CD14-positive monocyte (primary cell): ENCODE measurements at regions of chr4 and their contacts with region 1.

Region 1: DNA sequence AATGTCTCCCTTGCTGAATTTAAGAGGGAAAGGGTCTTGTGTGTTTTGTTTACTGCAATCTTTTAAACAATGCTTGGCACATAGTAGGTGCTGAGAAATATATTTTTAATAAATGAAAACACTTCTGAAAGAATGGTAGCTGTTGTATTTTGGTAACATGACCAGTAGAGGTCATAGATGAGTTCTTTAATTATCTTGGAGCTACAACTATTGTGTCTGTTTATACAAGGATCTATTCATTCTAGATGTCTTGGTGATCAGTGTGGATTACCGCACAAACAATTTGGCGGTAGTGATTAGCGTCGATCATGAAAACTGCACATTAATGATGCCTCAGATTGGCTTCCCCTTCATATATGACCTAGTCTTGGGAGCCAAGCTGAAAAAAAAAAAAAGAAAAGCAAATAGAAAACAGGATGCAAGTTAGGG is 21.4 kb upstream of the SCRG1 start:
- DNase-seq: peak in 2 of 3 donors; percentile 9 to 45
- H3K4me3 ChIP-seq: no peak overlapping the region
- H3K4me3 Mint-ChIP-seq: no peak overlapping the region
- H3K27ac ChIP-seq: no peak overlapping the region
- H3K27ac Mint-ChIP-seq: no peak overlapping the region
- H3K4me1 ChIP-seq: peaks cover 38 to 40% of the 10 kb centered on the region in 2 donors
- H3K4me1 Mint-ChIP-seq: peaks cover 35% of the 10 kb centered on the region
- H3K27me3 ChIP-seq: no peaks in the 10 kb centered on the region
- H3K27me3 Mint-ChIP-seq: peaks cover 0 to 3% (median 0%) of the 10 kb centered on the region in 3 donors
- CTCF ChIP-seq: peak; percentile 73

Region 2: DNA sequence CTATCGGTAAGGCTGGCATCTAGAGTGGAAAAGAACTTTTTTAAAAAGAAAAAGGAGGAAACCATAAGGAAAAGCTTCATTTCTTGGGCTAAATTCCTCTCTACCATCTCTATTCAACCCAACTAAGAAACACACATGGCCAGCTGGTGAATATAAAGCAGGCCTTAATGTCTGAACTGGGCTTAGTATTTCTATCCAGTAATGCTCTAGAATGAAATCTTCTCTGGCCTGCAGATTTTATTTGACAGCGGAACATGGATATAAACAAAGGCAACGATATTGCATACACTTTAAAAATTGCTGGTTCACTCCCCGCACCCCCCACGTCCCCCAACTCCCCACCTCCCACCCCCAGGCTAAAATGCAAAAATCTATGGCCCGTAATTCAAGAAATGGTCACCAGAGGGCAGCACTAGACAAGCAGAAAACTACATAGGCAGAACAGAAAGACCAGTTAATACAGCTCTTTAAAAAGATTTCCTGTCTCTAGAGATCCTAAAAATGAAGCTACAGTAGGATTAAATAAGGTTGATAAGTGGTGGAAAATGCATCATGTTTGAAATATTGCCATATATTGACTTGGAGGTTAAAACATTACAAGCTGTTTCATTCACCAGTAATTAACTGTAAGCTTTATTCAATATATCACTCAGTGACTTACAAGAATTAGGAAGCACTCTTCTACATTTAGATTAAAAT is 407.0 kb before region 1 on chr4:
- intact Hi-C with region 1: loop called (anchors 5 to 10 kb)
- DNase-seq: peak; percentile 28 to 41 (median 40)
- H3K4me3 ChIP-seq: no peak overlapping the region
- H3K4me3 Mint-ChIP-seq: no peak overlapping the region
- H3K27ac ChIP-seq: no peak overlapping the region
- H3K27ac Mint-ChIP-seq: no peak overlapping the region
- H3K4me1 ChIP-seq: peaks cover 0 to 18% of the 10 kb centered on the region in 2 donors
- H3K4me1 Mint-ChIP-seq: peaks cover 19% of the 10 kb centered on the region
- H3K27me3 ChIP-seq: no peaks in the 10 kb centered on the region
- H3K27me3 Mint-ChIP-seq: peaks cover 0 to 3% (median 0%) of the 10 kb centered on the region in 3 donors
- CTCF ChIP-seq: peak; percentile 85

Region 3: DNA sequence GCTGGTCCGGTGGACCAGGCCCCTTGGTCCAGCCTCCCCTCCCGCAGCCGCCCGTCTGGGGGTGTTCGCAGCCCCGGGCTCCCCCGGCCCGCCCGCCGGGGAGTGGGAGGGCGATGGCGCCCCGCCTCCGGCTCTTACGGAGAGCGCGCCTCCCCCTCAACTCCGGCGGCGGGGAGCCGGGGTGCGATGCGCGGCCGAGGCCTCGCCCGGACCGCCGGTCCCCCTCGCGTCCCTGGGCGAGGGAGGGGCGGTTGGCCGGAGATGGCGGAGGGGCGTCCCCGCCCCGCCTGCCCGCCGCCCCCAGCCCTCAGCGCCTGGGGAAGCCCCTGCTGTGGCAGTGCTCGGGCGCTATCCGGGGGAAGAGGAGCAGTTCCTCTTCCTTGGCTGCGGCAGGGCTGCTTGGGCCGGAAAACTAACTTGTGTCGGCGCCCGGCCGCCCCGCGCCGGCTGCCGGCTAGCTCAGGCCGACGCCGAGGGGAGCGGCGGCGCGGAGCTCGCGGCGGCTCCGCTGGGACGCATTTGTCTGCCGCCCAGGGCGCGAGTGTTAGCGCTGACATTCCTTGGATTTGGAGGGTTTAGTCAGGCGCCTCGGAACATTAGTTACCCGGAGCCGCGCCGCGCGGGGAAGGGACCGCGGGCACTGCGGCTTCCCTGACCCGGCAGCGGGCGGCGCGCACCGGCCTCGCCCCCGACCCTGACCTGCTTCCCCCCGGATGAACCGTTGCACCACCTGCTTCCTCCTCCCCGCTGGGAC is 250.7 kb before region 1 on chr4:
- intact Hi-C with region 1: loop called in 1 of 2 experiments (anchors 10 kb)
- DNase-seq: peak; percentile 74 to 83 (median 78)
- H3K4me3 ChIP-seq: peak overlapping the region; percentile 75 to 92 (median 83)
- H3K4me3 Mint-ChIP-seq: peak overlapping the region; percentile 80 to 87
- H3K27ac ChIP-seq: peak overlapping the region; percentile 84 to 89
- H3K27ac Mint-ChIP-seq: peak overlapping the region; percentile 78 to 90 (median 88)
- H3K4me1 ChIP-seq: peaks cover 46 to 59% of the 10 kb centered on the region in 2 donors
- H3K4me1 Mint-ChIP-seq: peaks cover 60% of the 10 kb centered on the region
- H3K27me3 ChIP-seq: no peaks in the 10 kb centered on the region
- H3K27me3 Mint-ChIP-seq: peaks cover 0 to 3% (median 0%) of the 10 kb centered on the region in 3 donors
- CTCF ChIP-seq: no peak

Region 4: GRCh38 chr4:173318648-173319211 is 101.6 kb before region 1 on chr4:
- intact Hi-C with region 1: loop called (anchors 2 to 5 kb)
- DNase-seq: peak; percentile 25 to 64 (median 62)
- H3K4me3 ChIP-seq: no peak overlapping the region
- H3K4me3 Mint-ChIP-seq: no peak overlapping the region
- H3K27ac ChIP-seq: peak overlapping the region in 1 of 2 donors; percentile 11
- H3K27ac Mint-ChIP-seq: peak overlapping the region in 3 of 7 donors; percentile 35 to 83 (median 69)
- H3K4me1 ChIP-seq: peaks cover 12 to 17% of the 10 kb centered on the region in 2 donors
- H3K4me1 Mint-ChIP-seq: peaks cover 15% of the 10 kb centered on the region
- H3K27me3 ChIP-seq: no peaks in the 10 kb centered on the region
- H3K27me3 Mint-ChIP-seq: no peaks in the 10 kb centered on the region
- CTCF ChIP-seq: peak; percentile 77

Region 5: DNA sequence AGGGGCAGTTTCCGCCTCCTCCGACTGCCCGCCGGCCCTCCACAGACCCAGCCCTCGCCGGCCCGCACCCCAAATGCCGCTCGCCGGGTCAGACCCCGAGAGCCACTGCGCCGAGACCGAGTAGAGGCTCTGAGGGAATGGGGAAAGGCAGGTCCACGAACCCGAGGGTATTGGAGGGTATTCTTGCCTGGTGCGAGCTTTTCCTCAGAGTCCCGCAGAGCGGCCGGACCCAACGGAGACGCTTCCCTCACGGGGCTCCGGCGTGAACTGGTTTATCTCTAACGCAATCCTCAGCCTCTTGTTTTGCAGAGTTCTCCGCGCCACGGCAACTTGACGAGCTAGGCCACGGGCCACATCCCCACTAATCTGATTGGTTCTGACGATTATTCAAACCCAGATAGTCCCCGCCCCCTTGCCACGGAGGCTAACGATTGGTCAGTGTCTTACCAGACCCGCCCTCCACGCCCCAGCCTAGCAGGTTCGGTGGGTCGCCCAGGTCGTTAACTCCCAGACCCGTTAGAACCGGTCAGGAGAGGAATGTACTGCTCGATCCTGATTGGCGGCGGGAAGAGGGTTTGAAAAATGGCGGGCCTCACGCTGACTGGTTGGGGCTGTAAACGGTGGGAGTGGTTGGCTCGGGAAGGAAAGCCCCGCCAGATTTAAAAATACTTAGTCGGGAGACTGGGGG is 86.1 kb before region 1 on chr4 and contains the start of gene HMGB2:
- intact Hi-C with region 1: loop called (anchors 5 kb)
- DNase-seq: peak; percentile 100
- H3K4me3 ChIP-seq: peak within 1 kb of the TSS; percentile 86 to 100 (median 98)
- H3K4me3 Mint-ChIP-seq: peak within 1 kb of the TSS; percentile 97 to 98
- H3K27ac ChIP-seq: peak within 1 kb of the TSS; percentile 94 to 97
- H3K27ac Mint-ChIP-seq: peak within 1 kb of the TSS; percentile 93 to 98 (median 96)
- H3K4me1 ChIP-seq: peaks cover 27 to 46% of the 10 kb centered on the region in 2 donors
- H3K4me1 Mint-ChIP-seq: peaks cover 35% of the 10 kb centered on the region
- H3K27me3 ChIP-seq: no peaks in the 10 kb centered on the region
- H3K27me3 Mint-ChIP-seq: peaks cover 0 to 4% (median 1%) of the 10 kb centered on the region in 3 donors
- CTCF ChIP-seq: no peak
- polyA plus RNA-seq, gene HMGB2: 129 to 299 (median 248) TPM

Region 6: GRCh38 chr4:173370477-173371291 is 49.7 kb before region 1 on chr4 and contains the start of gene SAP30:
- intact Hi-C with region 1: loop called (anchors 2 to 5 kb)
- DNase-seq: peak; percentile 93 to 98 (median 96)
- H3K4me3 ChIP-seq: peak within 1 kb of the TSS; percentile 79 to 98 (median 93)
- H3K4me3 Mint-ChIP-seq: peak within 1 kb of the TSS; percentile 100
- H3K27ac ChIP-seq: peak within 1 kb of the TSS; percentile 73 to 86
- H3K27ac Mint-ChIP-seq: peak within 1 kb of the TSS; percentile 93 to 98 (median 97)
- H3K4me1 ChIP-seq: peaks cover 13 to 40% of the 10 kb centered on the region in 2 donors
- H3K4me1 Mint-ChIP-seq: peaks cover 30% of the 10 kb centered on the region
- H3K27me3 ChIP-seq: no peaks in the 10 kb centered on the region
- H3K27me3 Mint-ChIP-seq: peaks cover 0 to 1% (median 0%) of the 10 kb centered on the region in 3 donors
- CTCF ChIP-seq: no peak
- polyA plus RNA-seq, gene SAP30: 16.5 to 32.2 (median 21.8) TPM

Region 7: GRCh38 chr4:173494013-173494970 is 74.0 kb after region 1 on chr4:
- intact Hi-C with region 1: loop called (anchors 10 kb)
- DNase-seq: peak in 2 of 3 donors; percentile 54 to 64
- H3K4me3 ChIP-seq: peak overlapping the region; percentile 17 to 74 (median 32)
- H3K4me3 Mint-ChIP-seq: peak overlapping the region; percentile 77 to 92
- H3K27ac ChIP-seq: no peak overlapping the region
- H3K27ac Mint-ChIP-seq: peak overlapping the region in 2 of 7 donors; percentile 41 to 45
- H3K4me1 ChIP-seq: peaks cover 45 to 59% of the 10 kb centered on the region in 2 donors
- H3K4me1 Mint-ChIP-seq: peaks cover 54% of the 10 kb centered on the region
- H3K27me3 ChIP-seq: peaks cover 9 to 23% of the 10 kb centered on the region in 2 donors
- H3K27me3 Mint-ChIP-seq: peaks cover 14 to 26% (median 19%) of the 10 kb centered on the region in 3 donors
- CTCF ChIP-seq: peak; percentile 85